CD4-positive, alpha-beta memory T cell (primary cell): ENCODE measurements at regions of chr15 and their contacts with region 1.

Region 1: GRCh38 chr15:62334536-62334935 is 169.5 kb upstream of the C2CD4B start:
- DNase-seq: no peak
- H3K4me3 ChIP-seq: no peak overlapping the region
- H3K4me3 Mint-ChIP-seq: no peak overlapping the region
- H3K27ac ChIP-seq: no peak overlapping the region
- H3K27ac Mint-ChIP-seq: no peak overlapping the region
- H3K4me1 ChIP-seq: no peaks in the 10 kb centered on the region
- H3K4me1 Mint-ChIP-seq: no peaks in the 10 kb centered on the region
- H3K27me3 ChIP-seq: no peaks in the 10 kb centered on the region
- H3K27me3 Mint-ChIP-seq: no peaks in the 10 kb centered on the region

Region 2: DNA sequence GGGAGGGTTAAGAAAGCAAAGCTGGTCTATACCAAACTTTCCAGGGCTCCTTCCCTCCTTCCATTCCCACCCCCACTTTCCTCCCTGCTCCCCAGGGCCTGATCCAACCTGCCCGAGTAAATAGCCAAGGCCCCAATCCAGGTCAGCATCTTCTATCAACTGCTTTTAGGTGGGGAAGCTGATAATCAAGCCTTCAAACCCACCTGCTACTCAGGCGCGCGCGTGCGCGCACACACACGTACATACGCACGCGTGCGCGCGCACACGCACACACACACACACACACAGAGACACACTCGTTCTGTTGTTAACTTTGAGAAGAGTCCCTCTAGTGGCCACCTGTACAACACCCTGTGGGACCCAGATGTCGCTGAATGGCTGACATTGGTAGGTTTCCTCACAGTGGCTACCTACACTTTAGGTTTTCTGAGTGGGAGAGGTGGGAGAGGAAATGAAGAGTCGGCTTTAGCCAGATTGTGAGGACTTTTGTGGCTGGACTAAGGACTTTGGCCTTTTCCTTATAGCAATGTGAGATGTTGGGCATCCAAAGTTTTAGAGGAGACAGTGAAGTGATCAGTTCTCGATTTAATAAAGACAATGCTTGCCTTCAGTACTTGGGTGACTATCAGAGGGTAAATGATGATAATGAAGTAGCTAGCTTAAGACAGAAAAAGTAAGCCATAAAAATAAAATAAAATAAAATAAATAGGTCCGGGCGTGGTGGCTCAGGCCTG is 10.4 kb after region 1 on chr15:
- CTCF ChIA-PET with region 1: interaction called, 13 read pairs
- POLR2A ChIA-PET with region 1: no interaction called
- intact Hi-C with region 1: no loop called
- DNase-seq: peak; percentile 61 to 70 (median 68)
- H3K4me3 ChIP-seq: no peak overlapping the region
- H3K4me3 Mint-ChIP-seq: peak overlapping the region; percentile 74 to 88 (median 83)
- H3K27ac ChIP-seq: no peak overlapping the region
- H3K27ac Mint-ChIP-seq: peak overlapping the region in 6 of 7 donors; percentile 33 to 87 (median 82)
- H3K4me1 ChIP-seq: no peaks in the 10 kb centered on the region
- H3K4me1 Mint-ChIP-seq: peaks cover 7% of the 10 kb centered on the region in 4 donors
- H3K27me3 ChIP-seq: no peaks in the 10 kb centered on the region
- H3K27me3 Mint-ChIP-seq: peaks cover 0 to 5% of the 10 kb centered on the region in 2 donors